Psoas muscle (tissue), 8 donors: ENCODE measurements at regions of chr12 and their contacts with region 1.

Region 1: GRCh38 chr12:52023182-52023975 is 16.6 kb downstream of the TAMALIN start:
- DNase-seq: peak; percentile 88 to 92
- ATAC-seq: peak; percentile 55 to 65 (median 64)
- H3K4me3 ChIP-seq: peak overlapping the region; percentile 61
- H3K27ac ChIP-seq: peak overlapping the region; percentile 7
- H3K4me1 ChIP-seq: peaks cover 30% of the 10 kb centered on the region
- H3K27me3 ChIP-seq: no peaks in the 10 kb centered on the region
- CTCF ChIP-seq: peak; percentile 93

Region 2: GRCh38 chr12:52121824-52122539 is 98.6 kb after region 1 on chr12:
- intact Hi-C with region 1: loop called in 1 of 2 experiments (anchors 2 kb)
- DNase-seq: peak; percentile 59 to 82
- ATAC-seq: peak; percentile 47 to 77 (median 70)
- H3K4me3 ChIP-seq: no peak overlapping the region
- H3K27ac ChIP-seq: no peak overlapping the region
- H3K4me1 ChIP-seq: no peaks in the 10 kb centered on the region
- H3K27me3 ChIP-seq: no peaks in the 10 kb centered on the region
- CTCF ChIP-seq: peak; percentile 71